ENCODE measurements at regions of chr17 and their contacts with region 1.

Region 1: GRCh38 chr17:7825206-7825990 is 8.6 kb upstream of the KDM6B start:
- DNase-seq: no peak
- ATAC-seq: no peak
- H3K4me3 Mint-ChIP-seq: no peak overlapping the region
- H3K27ac Mint-ChIP-seq: no peak overlapping the region
- H3K4me1 Mint-ChIP-seq: no peaks in the 10 kb centered on the region
- H3K27me3 Mint-ChIP-seq: peaks cover 18% of the 10 kb centered on the region
- CTCF ChIP-seq: no peak

Region 2: GRCh38 chr17:7851438-7852256 is 26.2 kb after region 1 on chr17:
- CTCF ChIA-PET with region 1: interaction called, 11 read pairs
- POLR2A ChIA-PET with region 1: interaction called, 5 read pairs
- intact Hi-C with region 1: loop called (anchors 1 kb)
- DNase-seq: peak; percentile 92
- ATAC-seq: peak; percentile 94
- H3K4me3 Mint-ChIP-seq: peak overlapping the region; percentile 62
- H3K27ac Mint-ChIP-seq: peak overlapping the region; percentile 71
- H3K4me1 Mint-ChIP-seq: peaks cover 37% of the 10 kb centered on the region
- H3K27me3 Mint-ChIP-seq: no peaks in the 10 kb centered on the region
- CTCF ChIP-seq: peak; percentile 39

Region 3: DNA sequence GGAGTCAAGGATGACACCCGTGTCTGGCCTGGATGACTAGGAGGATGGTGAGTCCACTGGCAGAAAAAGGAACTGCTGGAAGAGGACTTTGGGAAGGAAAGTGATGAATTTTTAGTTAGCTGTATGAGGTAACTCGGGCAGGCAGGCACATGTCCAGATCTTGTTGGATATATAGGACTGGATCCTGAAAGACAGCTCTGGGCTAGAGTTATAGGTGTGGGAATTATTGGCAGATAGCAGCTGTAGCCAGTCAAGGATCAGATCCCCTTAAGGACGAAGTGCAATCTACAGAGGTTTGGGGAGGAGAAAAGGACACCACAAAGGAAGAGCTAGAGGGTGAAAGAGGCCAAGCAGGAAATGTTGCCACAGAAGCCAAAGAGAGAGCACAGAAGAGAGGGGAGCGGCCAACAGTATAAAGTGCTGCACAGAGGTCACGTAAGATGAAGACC is 42.5 kb after region 1 on chr17:
- CTCF ChIA-PET with region 1: no interaction called
- POLR2A ChIA-PET with region 1: no interaction called
- intact Hi-C with region 1: no loop called
- DNase-seq: no peak
- ATAC-seq: no peak
- H3K4me3 Mint-ChIP-seq: no peak overlapping the region
- H3K27ac Mint-ChIP-seq: no peak overlapping the region
- H3K4me1 Mint-ChIP-seq: peaks cover 11% of the 10 kb centered on the region
- H3K27me3 Mint-ChIP-seq: no peaks in the 10 kb centered on the region
- CTCF ChIP-seq: no peak

Region 4: DNA sequence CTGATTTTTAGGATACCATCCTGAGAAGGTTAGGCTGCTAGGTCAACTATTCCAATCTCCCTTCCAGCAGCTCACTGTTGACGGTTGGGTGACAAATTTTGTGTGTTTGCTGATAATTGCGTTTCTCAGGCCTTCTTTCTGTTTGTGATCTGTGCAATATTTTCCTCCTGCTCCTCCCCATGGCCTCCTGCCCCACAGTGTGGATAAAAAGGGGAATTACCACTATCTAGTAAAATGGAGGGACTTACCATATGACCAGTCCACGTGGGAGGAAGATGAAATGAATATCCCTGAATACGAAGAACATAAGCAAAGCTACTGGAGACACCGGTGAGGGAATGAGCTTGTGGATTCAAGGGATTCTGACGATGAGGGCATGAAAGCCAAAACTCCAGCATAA is 72.4 kb after region 1 on chr17:
- CTCF ChIA-PET with region 1: no interaction called
- POLR2A ChIA-PET with region 1: interaction called, 4 read pairs
- intact Hi-C with region 1: loop called (anchors 1 kb)
- DNase-seq: no peak
- ATAC-seq: no peak
- H3K4me3 Mint-ChIP-seq: no peak overlapping the region
- H3K27ac Mint-ChIP-seq: no peak overlapping the region
- H3K4me1 Mint-ChIP-seq: no peaks in the 10 kb centered on the region
- H3K27me3 Mint-ChIP-seq: no peaks in the 10 kb centered on the region
- CTCF ChIP-seq: no peak

Region 5: DNA sequence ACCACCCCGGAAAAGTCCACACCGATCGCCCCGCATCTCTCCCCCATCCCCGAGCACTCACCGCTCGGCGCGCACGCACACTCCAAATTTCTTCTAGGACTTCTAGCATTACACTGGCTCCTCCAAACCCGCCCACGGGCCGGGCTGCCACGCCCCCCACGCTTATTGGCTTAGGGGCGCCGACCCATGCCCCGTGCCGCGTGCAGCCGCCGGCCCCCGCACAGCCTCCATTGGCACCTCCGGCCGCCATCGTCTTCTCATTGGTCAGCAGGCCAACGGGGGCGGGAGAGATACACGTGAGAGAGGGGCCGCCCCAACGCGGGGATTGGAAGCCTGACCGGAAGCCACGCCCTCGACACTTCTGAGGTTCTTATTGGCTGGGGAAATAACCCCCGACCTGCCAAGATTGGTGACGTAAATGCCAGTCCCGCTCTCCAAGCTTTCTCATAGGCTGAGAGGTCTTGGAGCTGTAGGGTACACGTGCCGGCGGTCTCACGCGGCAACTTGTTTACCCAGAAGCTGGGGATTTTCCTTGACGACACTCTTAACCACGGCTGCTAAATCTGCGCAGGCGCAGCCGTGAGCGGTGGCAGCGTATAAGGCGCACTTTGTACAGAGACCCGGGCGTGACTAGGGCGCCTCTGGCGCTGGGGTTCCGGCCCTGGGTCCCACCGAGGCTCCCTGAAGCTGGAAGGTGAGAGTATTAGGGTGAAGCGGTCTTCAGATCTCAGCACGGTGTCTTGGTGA is 331.0 kb after region 1 on chr17:
- CTCF ChIA-PET with region 1: no interaction called
- POLR2A ChIA-PET with region 1: no interaction called
- intact Hi-C with region 1: no loop called
- DNase-seq: peak; percentile 98
- ATAC-seq: peak; percentile 82
- H3K4me3 Mint-ChIP-seq: no peak overlapping the region
- H3K27ac Mint-ChIP-seq: no peak overlapping the region
- H3K4me1 Mint-ChIP-seq: peaks cover 48% of the 10 kb centered on the region
- H3K27me3 Mint-ChIP-seq: no peaks in the 10 kb centered on the region
- CTCF ChIP-seq: no peak

Measured in activated B cell treated with CpG ODN at 0.5 μM for 24 hours (primary cell).